Gastrocnemius medialis (tissue), 4 donors: ENCODE measurements at regions of chr12 and their contacts with region 1.

Region 1: DNA sequence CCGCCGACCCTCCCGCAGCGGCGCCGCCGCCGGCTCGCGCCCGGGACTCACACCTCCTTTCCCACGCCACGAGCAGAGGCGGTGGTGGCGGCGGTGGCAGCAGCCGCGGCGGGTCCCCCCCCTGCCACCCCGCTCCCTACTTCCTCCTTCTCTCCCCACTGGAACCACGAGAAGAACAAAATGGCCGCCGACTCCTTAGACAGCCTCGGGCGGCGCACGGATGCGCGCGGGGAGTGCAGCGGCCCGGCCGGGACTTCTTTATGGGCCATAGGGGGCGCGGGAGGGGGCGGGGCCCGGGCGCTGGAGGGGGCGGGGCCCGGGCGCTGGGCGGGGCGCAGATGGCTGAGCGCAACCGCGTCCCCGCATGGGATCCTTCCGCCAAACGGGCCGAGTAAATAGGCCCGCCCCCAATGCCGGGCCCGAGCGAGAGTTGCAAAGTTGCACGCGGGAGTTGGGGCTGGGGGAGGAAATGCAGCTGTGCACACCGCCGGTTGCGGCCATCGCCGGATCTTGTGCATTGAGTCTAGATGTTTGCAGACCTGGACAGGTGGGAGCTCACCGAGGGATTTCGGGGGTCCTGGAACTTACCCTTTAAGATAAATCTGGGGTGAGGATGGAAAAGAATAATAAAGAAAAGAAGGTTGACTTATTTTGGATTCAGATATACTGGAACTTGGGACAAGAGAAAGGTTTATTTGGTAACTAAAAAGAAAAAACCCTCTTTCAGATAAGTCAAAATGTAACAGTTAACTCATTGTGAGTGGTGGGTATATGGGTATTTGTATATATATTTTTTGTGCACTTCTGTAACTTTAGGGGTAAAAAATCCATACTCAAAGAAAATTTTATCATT is at the start of gene PPP1CC:
- DNase-seq: peak; percentile 89 to 92
- ATAC-seq: peak; percentile 88 to 89
- H3K4me3 ChIP-seq: peak within 1 kb of the TSS; percentile 92 to 100 (median 95)
- H3K27ac ChIP-seq: peak within 1 kb of the TSS; percentile 86 to 98 (median 94)
- H3K4me1 ChIP-seq: peaks cover 48% of the 10 kb centered on the region in 2 donors
- H3K27me3 ChIP-seq: no peaks in the 10 kb centered on the region
- CTCF ChIP-seq: peak in 1 of 5 experiments; percentile 23
- POLR2A ChIP-seq: peak; percentile 80 to 81
- total RNA-seq, gene PPP1CC: 96.4 to 226 (median 154) TPM

Region 2: GRCh38 chr12:109291521-109292341 is 1451.2 kb before region 1 on chr12:
- in situ Hi-C with region 1: no loop called
- intact Hi-C with region 1: no loop called
- DNase-seq: no peak
- ATAC-seq: peak; percentile 8 to 23
- H3K4me3 ChIP-seq: peak overlapping the region; percentile 32 to 48 (median 44)
- H3K27ac ChIP-seq: no peak overlapping the region
- H3K4me1 ChIP-seq: peaks cover 0 to 13% of the 10 kb centered on the region in 2 donors
- H3K27me3 ChIP-seq: no peaks in the 10 kb centered on the region
- CTCF ChIP-seq: no peak
- POLR2A ChIP-seq: no peak

Region 3: DNA sequence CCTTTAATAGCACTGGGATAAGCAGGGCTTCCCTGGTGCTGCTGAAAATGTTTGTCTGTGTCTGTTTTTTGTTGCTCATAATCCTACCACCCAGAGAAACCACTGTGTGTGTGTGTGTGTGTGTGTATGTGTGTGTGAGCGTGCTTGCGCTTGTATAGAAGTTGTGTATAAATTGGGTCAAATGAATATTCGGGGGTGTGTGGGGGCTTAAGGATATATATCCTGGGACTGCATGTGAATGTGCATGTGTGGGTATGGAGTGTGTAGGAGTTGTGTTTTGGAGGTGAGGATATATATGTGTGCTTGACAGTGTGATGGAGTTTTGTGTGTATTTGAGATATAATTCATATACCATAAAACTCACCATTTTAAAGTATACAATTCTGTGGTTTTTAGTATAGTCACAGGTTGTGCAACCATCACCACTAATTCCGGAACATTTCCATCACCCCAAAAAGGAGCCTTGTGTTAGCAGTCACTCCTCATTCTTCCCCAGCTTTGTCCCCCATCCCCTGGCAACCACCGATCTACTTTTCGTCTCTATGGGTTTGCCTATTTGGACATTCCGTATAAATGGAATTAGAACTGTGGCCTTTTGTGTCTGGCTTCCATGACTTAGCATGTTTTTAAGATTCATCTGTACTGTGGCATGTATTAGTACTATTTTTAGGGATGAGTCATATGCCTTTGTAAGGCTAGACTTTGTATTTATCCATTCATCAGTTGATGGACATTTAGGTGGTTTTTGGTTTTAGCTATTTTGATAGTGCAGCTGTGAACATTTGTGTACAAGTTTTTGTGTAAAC is 103.4 kb before region 1 on chr12:
- in situ Hi-C with region 1: no loop called
- intact Hi-C with region 1: loop called (anchors 5 kb)
- DNase-seq: no peak
- ATAC-seq: peak; percentile 47 to 59
- H3K4me3 ChIP-seq: no peak overlapping the region
- H3K27ac ChIP-seq: peak overlapping the region; percentile 80 to 91 (median 85)
- H3K4me1 ChIP-seq: peaks cover 22 to 53% of the 10 kb centered on the region in 2 donors
- H3K27me3 ChIP-seq: no peaks in the 10 kb centered on the region
- CTCF ChIP-seq: no peak
- POLR2A ChIP-seq: no peak

Region 4: DNA sequence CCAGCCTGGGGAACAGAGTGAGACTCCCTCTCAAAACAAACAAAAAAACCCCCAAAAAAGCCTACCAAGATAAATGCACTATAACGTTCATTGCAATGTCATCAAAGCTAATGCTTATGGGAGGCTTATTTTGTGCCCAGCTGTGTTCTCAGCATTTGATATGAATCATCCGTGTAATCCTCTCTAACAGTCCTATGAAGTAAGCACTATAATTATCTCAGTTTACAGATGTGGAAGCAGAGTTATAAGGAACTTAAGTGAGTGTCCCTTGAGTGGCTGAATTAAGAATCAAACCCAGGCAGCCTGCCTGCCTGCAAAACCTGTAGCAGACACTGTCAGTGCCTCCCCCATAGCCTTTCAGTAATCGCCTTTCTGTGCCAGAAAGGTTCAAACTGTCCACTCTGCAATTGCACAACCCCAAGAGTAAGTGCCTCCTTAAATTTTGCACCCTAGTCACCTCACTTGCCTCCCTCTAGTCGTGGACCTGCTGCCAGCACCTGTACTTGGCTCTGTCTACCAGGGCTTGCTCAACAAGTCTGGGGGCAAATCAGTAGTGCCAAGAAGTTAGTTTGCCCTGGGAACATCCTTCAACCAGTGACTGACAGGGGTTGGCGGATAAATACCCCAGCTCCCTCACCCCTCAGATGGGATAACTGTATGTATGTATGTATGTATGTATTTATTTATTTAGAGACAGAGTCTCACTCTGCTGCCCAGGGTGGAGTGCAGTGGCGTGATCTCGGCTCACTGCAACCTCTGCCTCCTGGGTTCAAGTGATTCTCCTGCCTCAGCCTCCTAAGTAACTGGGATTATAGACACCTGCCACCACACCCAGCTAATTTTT is 23.6 kb after region 1 on chr12:
- in situ Hi-C with region 1: no loop called
- intact Hi-C with region 1: loop called (anchors 2 kb)
- DNase-seq: peak; percentile 59 to 87
- ATAC-seq: peak; percentile 97
- H3K4me3 ChIP-seq: no peak overlapping the region
- H3K27ac ChIP-seq: peak overlapping the region; percentile 57 to 81 (median 72)
- H3K4me1 ChIP-seq: peaks cover 0 to 18% of the 10 kb centered on the region in 2 donors
- H3K27me3 ChIP-seq: no peaks in the 10 kb centered on the region
- CTCF ChIP-seq: no peak
- POLR2A ChIP-seq: no peak

Region 5: DNA sequence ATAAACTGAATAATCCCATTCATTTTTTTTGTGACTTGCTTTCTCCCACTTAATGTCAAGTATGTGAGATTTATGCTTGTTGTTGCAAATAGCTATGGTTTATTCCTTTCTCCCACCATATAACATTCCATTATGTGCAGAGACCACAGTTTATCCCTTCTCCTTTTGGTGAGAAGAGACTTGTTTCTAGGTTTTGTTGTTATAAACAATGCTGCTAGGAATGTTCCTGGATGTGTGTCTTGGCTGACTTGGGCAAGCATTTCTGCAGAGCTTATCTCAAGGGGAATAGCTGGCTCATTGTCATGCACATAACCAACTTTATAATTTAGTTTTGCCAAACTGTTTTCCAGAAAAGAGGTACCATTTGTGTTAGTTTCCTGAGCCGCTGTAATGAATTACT is 47.4 kb after region 1 on chr12:
- in situ Hi-C with region 1: no loop called
- intact Hi-C with region 1: no loop called
- DNase-seq: no peak
- ATAC-seq: peak in 1 of 2 donors; percentile 41
- H3K4me3 ChIP-seq: no peak overlapping the region
- H3K27ac ChIP-seq: no peak overlapping the region
- H3K4me1 ChIP-seq: no peaks in the 10 kb centered on the region
- H3K27me3 ChIP-seq: no peaks in the 10 kb centered on the region
- CTCF ChIP-seq: no peak
- POLR2A ChIP-seq: no peak

Region 6: GRCh38 chr12:110809149-110809548 is 66.2 kb after region 1 on chr12:
- in situ Hi-C with region 1: no loop called
- intact Hi-C with region 1: no loop called
- DNase-seq: no peak
- ATAC-seq: no peak
- H3K4me3 ChIP-seq: no peak overlapping the region
- H3K27ac ChIP-seq: no peak overlapping the region
- H3K4me1 ChIP-seq: no peaks in the 10 kb centered on the region
- H3K27me3 ChIP-seq: no peaks in the 10 kb centered on the region
- CTCF ChIP-seq: no peak
- POLR2A ChIP-seq: no peak